GM13977 (cell line): ENCODE measurements at regions of chrX and their contacts with region 1.

Region 1: GRCh38 chrX:100768679-100769338 is 36.9 kb upstream of the SYTL4 start:
- DNase-seq: peak; percentile 70
- CTCF ChIP-seq: peak; percentile 100

Region 2: GRCh38 chrX:100512471-100512870 is 256.3 kb before region 1 on chrX:
- in situ Hi-C with region 1: loop called (anchors 25 kb)
- DNase-seq: peak; percentile 52
- CTCF ChIP-seq: peak; percentile 67

Region 3: DNA sequence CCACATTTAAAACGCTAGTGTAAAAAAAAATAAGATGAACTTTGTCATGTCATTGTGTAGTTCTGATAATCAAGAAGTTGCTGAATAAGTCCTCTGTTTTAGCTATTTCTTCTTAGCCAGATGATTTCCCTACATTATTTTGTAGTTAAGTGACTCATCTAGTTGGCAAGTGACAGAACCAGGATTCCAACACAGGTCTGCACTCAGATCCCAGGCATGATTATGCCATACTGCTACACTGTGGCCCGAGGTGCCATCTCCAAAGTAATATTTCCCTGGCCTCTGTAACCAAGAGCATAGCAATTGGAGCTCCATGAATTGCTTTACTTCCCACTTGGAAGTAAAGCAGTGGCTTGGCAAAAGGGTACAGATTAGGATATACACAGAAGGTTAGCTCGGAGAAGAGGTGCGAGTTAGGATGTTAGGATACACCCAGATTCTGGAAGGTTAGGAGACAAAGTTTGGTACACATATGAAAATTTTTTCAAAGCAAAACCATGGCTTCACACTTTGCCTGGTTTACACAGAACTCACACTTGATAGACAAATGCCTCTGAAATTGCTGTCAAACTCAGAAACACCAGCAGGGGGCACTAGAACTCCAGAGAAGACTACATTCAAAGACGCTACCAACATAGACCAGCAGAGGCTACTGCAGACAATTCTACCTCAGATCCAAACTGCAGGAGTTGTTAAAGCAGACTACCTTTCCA is 83.4 kb before region 1 on chrX:
- in situ Hi-C with region 1: loop called (anchors 5 kb)
- DNase-seq: peak; percentile 67
- CTCF ChIP-seq: peak; percentile 69